CD4-positive, alpha-beta memory T cell (primary cell): ENCODE measurements at regions of chrX and their contacts with region 1.

Region 1: DNA sequence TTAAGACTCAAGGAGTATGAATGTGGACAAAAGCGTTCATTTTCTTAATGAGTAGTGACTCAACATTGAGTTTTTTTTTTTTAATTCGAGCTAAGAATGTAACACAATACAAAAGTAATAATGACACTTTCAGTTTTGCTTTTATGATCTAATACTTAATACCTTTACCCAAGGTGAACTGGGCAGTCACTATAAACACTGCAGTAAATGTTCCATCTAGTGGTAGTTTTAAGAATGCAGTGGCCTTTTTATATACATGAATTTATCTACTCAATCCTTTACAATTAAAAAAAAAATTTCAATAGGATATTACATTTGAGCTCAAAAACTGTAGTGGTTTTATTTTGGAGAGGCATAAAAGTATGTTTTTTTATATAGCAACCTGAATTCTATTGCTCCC is 33.9 kb downstream of the PDK3 start:
- DNase-seq: peak in 4 of 5 donors; percentile 45 to 64 (median 54)
- H3K4me3 ChIP-seq: no peak overlapping the region
- H3K4me3 Mint-ChIP-seq: peak overlapping the region; percentile 22 to 86 (median 65)
- H3K27ac ChIP-seq: peak overlapping the region; percentile 42
- H3K27ac Mint-ChIP-seq: peak overlapping the region; percentile 50 to 97 (median 84)
- H3K4me1 ChIP-seq: peaks cover 22% of the 10 kb centered on the region
- H3K4me1 Mint-ChIP-seq: peaks cover 15 to 35% (median 20%) of the 10 kb centered on the region in 4 donors
- H3K27me3 ChIP-seq: no peaks in the 10 kb centered on the region
- H3K27me3 Mint-ChIP-seq: no peaks in the 10 kb centered on the region

Region 2: DNA sequence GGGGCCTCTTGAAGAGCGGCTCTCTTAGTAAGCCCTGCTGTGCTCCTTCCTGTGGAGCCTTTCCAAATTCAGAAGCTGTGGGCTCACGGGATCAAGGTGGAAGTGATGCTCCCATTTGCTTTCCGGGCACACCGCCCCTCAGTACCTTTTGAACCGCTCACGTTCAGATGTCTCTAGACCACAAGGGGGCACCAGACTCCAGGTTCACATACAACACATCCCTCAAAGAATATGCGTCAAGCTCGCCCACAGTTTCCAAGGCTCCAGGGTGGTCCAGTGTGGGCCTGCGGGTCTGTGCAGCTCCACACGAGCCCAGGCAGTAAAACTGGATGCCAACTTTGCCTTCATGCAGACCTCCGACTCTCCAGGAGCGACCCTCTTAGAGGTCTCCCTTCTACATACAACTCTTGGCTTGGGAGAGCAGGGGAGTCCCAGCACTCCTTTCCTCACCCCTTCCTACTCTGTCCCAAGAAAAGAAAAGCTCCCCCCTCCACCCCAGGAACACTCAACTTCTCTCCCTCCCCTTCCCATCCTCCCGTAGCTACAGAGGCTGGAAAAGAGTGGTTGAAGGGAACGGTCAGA is 127.5 kb before region 1 on chrX:
- CTCF ChIA-PET with region 1: interaction called, 40 read pairs
- POLR2A ChIA-PET with region 1: no interaction called
- intact Hi-C with region 1: loop called (anchors 1 kb)
- DNase-seq: peak; percentile 43 to 57 (median 56)
- H3K4me3 ChIP-seq: no peak overlapping the region
- H3K4me3 Mint-ChIP-seq: peak overlapping the region; percentile 18 to 75 (median 48)
- H3K27ac ChIP-seq: no peak overlapping the region
- H3K27ac Mint-ChIP-seq: peak overlapping the region in 1 of 7 donors; percentile 0
- H3K4me1 ChIP-seq: peaks cover 3% of the 10 kb centered on the region
- H3K4me1 Mint-ChIP-seq: peaks cover 5 to 12% (median 8%) of the 10 kb centered on the region in 4 donors
- H3K27me3 ChIP-seq: no peaks in the 10 kb centered on the region
- H3K27me3 Mint-ChIP-seq: peaks cover 0 to 9% of the 10 kb centered on the region in 2 donors

Region 3: DNA sequence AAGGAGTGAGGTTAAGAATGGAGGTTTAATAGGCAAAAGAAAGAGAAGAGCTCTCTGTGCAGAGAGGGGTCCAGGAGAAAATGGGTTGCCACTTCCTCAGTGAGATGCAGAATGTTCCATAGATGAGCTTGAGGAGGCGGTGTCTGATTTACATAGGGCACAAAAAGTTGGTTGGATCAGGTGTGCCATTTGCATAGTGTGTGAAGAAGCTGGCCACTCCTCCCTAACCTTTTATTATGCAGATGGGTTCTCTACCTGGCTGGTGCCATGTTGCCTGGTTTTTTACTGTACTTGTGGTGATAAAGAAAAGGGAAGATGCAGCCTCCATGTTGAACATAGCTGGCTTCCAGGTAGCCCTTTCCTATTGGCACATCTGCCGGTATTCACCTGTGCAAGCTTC is 111.3 kb before region 1 on chrX:
- CTCF ChIA-PET with region 1: interaction called, 319 read pairs
- POLR2A ChIA-PET with region 1: no interaction called
- intact Hi-C with region 1: no loop called
- DNase-seq: no peak
- H3K4me3 ChIP-seq: no peak overlapping the region
- H3K4me3 Mint-ChIP-seq: no peak overlapping the region
- H3K27ac ChIP-seq: no peak overlapping the region
- H3K27ac Mint-ChIP-seq: no peak overlapping the region
- H3K4me1 ChIP-seq: no peaks in the 10 kb centered on the region
- H3K4me1 Mint-ChIP-seq: no peaks in the 10 kb centered on the region
- H3K27me3 ChIP-seq: no peaks in the 10 kb centered on the region
- H3K27me3 Mint-ChIP-seq: peaks cover 5 to 13% of the 10 kb centered on the region in 2 donors

Region 4: DNA sequence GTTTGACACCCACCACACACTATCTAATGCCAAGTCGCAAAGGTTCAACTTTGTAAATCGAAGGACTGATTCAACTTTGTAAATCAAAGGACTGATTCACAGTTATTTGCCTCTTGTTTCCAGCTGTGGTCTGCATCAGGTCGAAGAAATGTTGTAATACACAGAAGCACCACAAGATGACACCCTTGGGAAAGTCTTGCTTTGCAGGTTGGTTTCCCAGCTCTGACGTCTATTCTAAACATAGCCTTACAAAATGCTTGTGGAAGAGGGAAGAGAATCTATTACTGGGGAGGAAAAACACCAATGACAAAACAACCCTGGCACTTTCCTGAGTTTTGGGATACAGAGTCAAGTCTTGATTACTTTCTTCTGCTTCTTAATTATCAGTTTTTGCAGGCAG is 103.2 kb before region 1 on chrX:
- CTCF ChIA-PET with region 1: interaction called, 319 read pairs
- POLR2A ChIA-PET with region 1: interaction called, 24 read pairs
- intact Hi-C with region 1: loop called (anchors 1 kb)
- DNase-seq: peak; percentile 56 to 64 (median 60)
- H3K4me3 ChIP-seq: no peak overlapping the region
- H3K4me3 Mint-ChIP-seq: no peak overlapping the region
- H3K27ac ChIP-seq: no peak overlapping the region
- H3K27ac Mint-ChIP-seq: peak overlapping the region in 1 of 7 donors; percentile 51
- H3K4me1 ChIP-seq: no peaks in the 10 kb centered on the region
- H3K4me1 Mint-ChIP-seq: peaks cover 0 to 6% (median 2%) of the 10 kb centered on the region in 4 donors
- H3K27me3 ChIP-seq: no peaks in the 10 kb centered on the region
- H3K27me3 Mint-ChIP-seq: peaks cover 5 to 7% of the 10 kb centered on the region in 2 donors

Region 5: GRCh38 chrX:24464836-24465531 is 34.0 kb before region 1 on chrX and contains the start of gene PDK3:
- CTCF ChIA-PET with region 1: interaction called, 33 read pairs
- POLR2A ChIA-PET with region 1: interaction called, 21 read pairs
- intact Hi-C with region 1: loop called (anchors 1 kb)
- DNase-seq: peak; percentile 89 to 91 (median 91)
- H3K4me3 ChIP-seq: peak within 1 kb of the TSS; percentile 44 to 62
- H3K4me3 Mint-ChIP-seq: peak within 1 kb of the TSS; percentile 81 to 90 (median 87)
- H3K27ac ChIP-seq: peak within 1 kb of the TSS; percentile 87
- H3K27ac Mint-ChIP-seq: peak within 1 kb of the TSS; percentile 89 to 97 (median 92)
- H3K4me1 ChIP-seq: peaks cover 40% of the 10 kb centered on the region
- H3K4me1 Mint-ChIP-seq: peaks cover 16 to 42% (median 28%) of the 10 kb centered on the region in 4 donors
- H3K27me3 ChIP-seq: no peaks in the 10 kb centered on the region
- H3K27me3 Mint-ChIP-seq: no peaks in the 10 kb centered on the region
- total RNA-seq, gene PDK3: 30.3 to 31.1 TPM

Region 6: GRCh38 chrX:24479924-24480323 is 19.1 kb before region 1 on chrX:
- CTCF ChIA-PET with region 1: interaction called, 19 read pairs
- POLR2A ChIA-PET with region 1: interaction called, 23 read pairs
- intact Hi-C with region 1: loop called (anchors 2 kb)
- DNase-seq: peak; percentile 77 to 94 (median 89)
- H3K4me3 ChIP-seq: peak overlapping the region in 1 of 2 donors; percentile 44
- H3K4me3 Mint-ChIP-seq: peak overlapping the region; percentile 53 to 86 (median 74)
- H3K27ac ChIP-seq: peak overlapping the region; percentile 82
- H3K27ac Mint-ChIP-seq: peak overlapping the region; percentile 86 to 97 (median 92)
- H3K4me1 ChIP-seq: peaks cover 83% of the 10 kb centered on the region
- H3K4me1 Mint-ChIP-seq: peaks cover 42 to 89% (median 64%) of the 10 kb centered on the region in 4 donors
- H3K27me3 ChIP-seq: no peaks in the 10 kb centered on the region
- H3K27me3 Mint-ChIP-seq: no peaks in the 10 kb centered on the region

Region 7: DNA sequence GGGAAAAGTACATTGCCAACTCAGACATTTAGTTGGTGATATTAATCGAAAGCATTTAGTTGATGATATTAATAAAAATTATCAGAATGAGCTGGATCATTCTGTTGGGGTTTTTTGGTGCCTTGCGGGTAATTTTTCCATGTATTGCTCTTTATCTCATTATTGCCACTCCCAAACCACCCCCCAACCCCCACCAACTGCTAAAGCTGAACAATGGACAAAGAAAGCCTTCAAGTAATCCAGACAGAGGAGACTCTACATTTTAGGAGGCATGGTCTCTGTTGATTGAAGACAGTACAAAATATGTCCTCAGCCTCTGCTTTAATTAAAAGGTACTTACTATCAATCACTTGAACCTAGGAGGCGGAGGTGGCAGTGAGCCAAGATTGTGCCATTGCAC is 11.4 kb before region 1 on chrX:
- CTCF ChIA-PET with region 1: interaction called, 17 read pairs
- POLR2A ChIA-PET with region 1: interaction called, 3 read pairs
- intact Hi-C with region 1: no loop called
- DNase-seq: no peak
- H3K4me3 ChIP-seq: no peak overlapping the region
- H3K4me3 Mint-ChIP-seq: no peak overlapping the region
- H3K27ac ChIP-seq: no peak overlapping the region
- H3K27ac Mint-ChIP-seq: no peak overlapping the region
- H3K4me1 ChIP-seq: peaks cover 13% of the 10 kb centered on the region
- H3K4me1 Mint-ChIP-seq: peaks cover 7 to 19% (median 13%) of the 10 kb centered on the region in 4 donors
- H3K27me3 ChIP-seq: no peaks in the 10 kb centered on the region
- H3K27me3 Mint-ChIP-seq: no peaks in the 10 kb centered on the region

Region 8: GRCh38 chrX:24520472-24520871 is 21.5 kb after region 1 on chrX:
- CTCF ChIA-PET with region 1: no interaction called
- POLR2A ChIA-PET with region 1: no interaction called
- intact Hi-C with region 1: no loop called
- DNase-seq: no peak
- H3K4me3 ChIP-seq: no peak overlapping the region
- H3K4me3 Mint-ChIP-seq: no peak overlapping the region
- H3K27ac ChIP-seq: no peak overlapping the region
- H3K27ac Mint-ChIP-seq: no peak overlapping the region
- H3K4me1 ChIP-seq: no peaks in the 10 kb centered on the region
- H3K4me1 Mint-ChIP-seq: no peaks in the 10 kb centered on the region
- H3K27me3 ChIP-seq: no peaks in the 10 kb centered on the region
- H3K27me3 Mint-ChIP-seq: no peaks in the 10 kb centered on the region